Prostate gland (tissue), 2 donors: ENCODE measurements at regions of chr17 and their contacts with region 1.

Region 1: GRCh38 chr17:43024407-43025289 is at the start of gene RND2:
- DNase-seq: peak; percentile 87
- H3K4me3 ChIP-seq: peak within 1 kb of the TSS; percentile 35 to 39
- H3K27ac ChIP-seq: peak within 1 kb of the TSS; percentile 68 to 86
- H3K4me1 ChIP-seq: peaks cover 5% of the 10 kb centered on the region
- H3K27me3 ChIP-seq: no peaks in the 10 kb centered on the region
- CTCF ChIP-seq: peak; percentile 58 to 95 (median 72)
- POLR2A ChIP-seq: peak; percentile 59
- total RNA-seq, gene RND2: 1.6 to 4.3 TPM

Region 2: GRCh38 chr17:42744806-42745617 is 279.6 kb before region 1 on chr17 and contains the start of gene EZH1:
- intact Hi-C with region 1: no loop called
- DNase-seq: peak; percentile 87
- H3K4me3 ChIP-seq: peak within 1 kb of the TSS; percentile 70 to 73
- H3K27ac ChIP-seq: peak within 1 kb of the TSS; percentile 96 to 97
- H3K4me1 ChIP-seq: peaks cover 17% of the 10 kb centered on the region
- H3K27me3 ChIP-seq: no peaks in the 10 kb centered on the region
- CTCF ChIP-seq: peak in 2 of 4 experiments; percentile 54 to 56
- POLR2A ChIP-seq: peak; percentile 76
- total RNA-seq, gene EZH1: 28.5 to 61.2 TPM

Region 3: GRCh38 chr17:43125133-43125966 is 100.7 kb after region 1 on chr17 and contains the start of gene BRCA1:
- intact Hi-C with region 1: loop called (anchors 5 kb)
- DNase-seq: peak; percentile 96
- H3K4me3 ChIP-seq: peak within 1 kb of the TSS; percentile 44 to 60
- H3K27ac ChIP-seq: peak within 1 kb of the TSS; percentile 33 to 59
- H3K4me1 ChIP-seq: no peaks in the 10 kb centered on the region
- H3K27me3 ChIP-seq: no peaks in the 10 kb centered on the region
- CTCF ChIP-seq: peak in 1 of 4 experiments; percentile 14
- POLR2A ChIP-seq: peak; percentile 62
- total RNA-seq, gene BRCA1: 9.1 to 12.8 TPM